Ascending aorta (tissue), 2 donors: ENCODE measurements at regions of chr12 and their contacts with region 1.

Region 1: GRCh38 chr12:53746592-53747092 is 5.1 kb downstream of the CISTR start:
- DNase-seq: peak; percentile 38 to 94
- H3K4me3 ChIP-seq: no peak overlapping the region
- H3K27ac ChIP-seq: no peak overlapping the region
- H3K4me1 ChIP-seq: peaks cover 7 to 18% of the 10 kb centered on the region in 2 donors
- H3K27me3 ChIP-seq: peaks cover 4% of the 10 kb centered on the region
- CTCF ChIP-seq: peak; percentile 100

Region 2: GRCh38 chr12:53543539-53543938 is 203.1 kb before region 1 on chr12:
- intact Hi-C with region 1: loop called (anchors 2 kb)
- DNase-seq: peak in 1 of 2 donors; percentile 78
- H3K4me3 ChIP-seq: no peak overlapping the region
- H3K27ac ChIP-seq: peak overlapping the region; percentile 57 to 65
- H3K4me1 ChIP-seq: peaks cover 0 to 7% of the 10 kb centered on the region in 2 donors
- H3K27me3 ChIP-seq: no peaks in the 10 kb centered on the region
- CTCF ChIP-seq: peak; percentile 77 to 94 (median 89)

Region 3: GRCh38 chr12:53701518-53702260 is 45.0 kb before region 1 on chr12:
- intact Hi-C with region 1: loop called (anchors 1 kb)
- DNase-seq: peak in 1 of 2 donors; percentile 91
- H3K4me3 ChIP-seq: no peak overlapping the region
- H3K27ac ChIP-seq: no peak overlapping the region
- H3K4me1 ChIP-seq: peaks cover 0 to 2% of the 10 kb centered on the region in 2 donors
- H3K27me3 ChIP-seq: peaks cover 4% of the 10 kb centered on the region
- CTCF ChIP-seq: peak; percentile 90 to 94 (median 91)

Region 4: GRCh38 chr12:53766881-53767280 is 20.2 kb after region 1 on chr12:
- intact Hi-C with region 1: no loop called
- DNase-seq: no peak
- H3K4me3 ChIP-seq: no peak overlapping the region
- H3K27ac ChIP-seq: no peak overlapping the region
- H3K4me1 ChIP-seq: no peaks in the 10 kb centered on the region
- H3K27me3 ChIP-seq: no peaks in the 10 kb centered on the region
- CTCF ChIP-seq: no peak

Region 5: DNA sequence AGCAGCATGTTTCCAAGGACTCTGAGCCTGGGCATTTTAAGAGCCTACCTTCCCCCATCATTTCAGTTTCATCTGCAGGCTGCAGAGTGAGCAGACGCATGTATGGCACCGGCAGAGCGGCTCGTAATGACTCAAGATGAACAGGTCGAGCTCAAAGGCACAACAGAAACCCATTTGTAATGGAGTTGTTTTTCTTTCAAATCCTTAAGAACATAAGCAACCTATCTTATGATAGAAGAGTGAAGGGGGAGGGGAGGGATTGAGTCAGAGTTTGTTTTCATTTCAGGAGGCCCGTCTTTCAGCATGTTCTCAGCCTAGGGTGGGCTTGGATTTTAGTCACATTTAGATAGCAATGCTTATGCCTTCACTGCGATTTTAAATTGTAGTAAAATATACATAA is 60.1 kb after region 1 on chr12:
- intact Hi-C with region 1: no loop called
- DNase-seq: no peak
- H3K4me3 ChIP-seq: no peak overlapping the region
- H3K27ac ChIP-seq: no peak overlapping the region
- H3K4me1 ChIP-seq: no peaks in the 10 kb centered on the region
- H3K27me3 ChIP-seq: no peaks in the 10 kb centered on the region
- CTCF ChIP-seq: no peak

Region 6: DNA sequence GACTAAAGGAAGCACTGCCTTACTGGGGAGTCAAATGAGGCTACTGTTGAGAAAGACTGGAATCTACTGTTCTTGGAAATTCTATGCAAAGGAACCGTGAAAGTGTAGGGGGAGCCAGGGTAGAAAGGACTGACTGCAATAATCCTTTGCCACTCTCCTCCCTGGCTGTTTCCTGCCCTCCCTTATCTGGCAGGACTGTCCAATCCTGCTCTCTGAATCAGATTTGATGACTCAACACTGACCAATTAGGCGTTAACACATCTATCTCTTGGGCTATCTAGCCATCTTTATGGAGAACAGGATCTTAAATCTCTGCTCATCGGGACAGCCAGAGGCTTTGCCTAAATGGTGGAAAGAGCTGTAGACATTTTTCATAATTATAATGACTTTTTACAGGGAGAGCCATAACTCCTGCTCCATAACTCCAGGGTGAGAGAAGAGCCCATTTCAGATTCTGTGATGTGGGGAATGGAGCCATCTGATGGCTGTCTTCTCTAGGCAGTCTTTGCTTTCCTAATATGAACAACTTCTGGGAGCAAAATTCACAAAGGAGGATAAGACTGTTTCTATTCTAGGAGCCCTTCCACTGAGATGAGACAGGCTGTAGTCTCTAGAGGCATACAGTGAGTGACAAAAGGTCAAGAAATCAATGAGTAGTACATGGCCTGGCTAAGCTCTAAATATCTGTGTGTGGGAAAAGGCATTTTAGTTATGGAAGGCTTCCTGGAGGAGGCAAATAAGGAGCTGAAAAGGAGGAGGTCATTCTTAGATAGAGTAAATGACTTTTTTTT is 74.1 kb after region 1 on chr12:
- intact Hi-C with region 1: no loop called
- DNase-seq: no peak
- H3K4me3 ChIP-seq: no peak overlapping the region
- H3K27ac ChIP-seq: no peak overlapping the region
- H3K4me1 ChIP-seq: no peaks in the 10 kb centered on the region
- H3K27me3 ChIP-seq: no peaks in the 10 kb centered on the region
- CTCF ChIP-seq: no peak

Region 7: GRCh38 chr12:54207484-54208294 is 461.0 kb after region 1 on chr12:
- intact Hi-C with region 1: loop called (anchors 10 kb)
- DNase-seq: peak in 1 of 2 donors; percentile 88
- H3K4me3 ChIP-seq: no peak overlapping the region
- H3K27ac ChIP-seq: no peak overlapping the region
- H3K4me1 ChIP-seq: no peaks in the 10 kb centered on the region
- H3K27me3 ChIP-seq: no peaks in the 10 kb centered on the region
- CTCF ChIP-seq: peak; percentile 76 to 92 (median 91)